ENCODE measurements at regions of chr19 and their contacts with region 1.

Region 1: DNA sequence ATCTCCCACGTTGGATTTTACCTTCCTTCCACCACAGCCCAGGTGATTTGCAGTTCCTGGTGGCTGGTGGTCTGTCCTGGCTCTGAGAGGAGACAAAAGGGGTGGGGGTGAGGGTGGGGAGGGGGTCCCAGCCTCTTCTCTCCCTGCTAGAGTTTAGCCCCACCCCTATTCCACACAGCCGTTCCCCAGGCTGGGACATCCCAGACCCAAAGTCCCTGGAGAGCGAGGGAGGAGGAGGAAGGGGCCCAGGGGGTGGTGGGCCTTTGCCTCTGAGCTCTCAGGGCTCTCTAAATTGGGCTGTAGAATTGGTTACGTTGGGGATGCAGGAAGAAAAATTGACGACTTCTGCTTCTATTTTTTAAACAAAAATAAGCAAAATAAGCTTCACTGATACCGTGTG is 81.9 kb downstream of the SLC6A16 start:
- DNase-seq: no peak
- H3K4me3 ChIP-seq: no peak overlapping the region
- H3K27ac ChIP-seq: no peak overlapping the region
- H3K4me1 ChIP-seq: no peaks in the 10 kb centered on the region
- H3K27me3 ChIP-seq: no peaks in the 10 kb centered on the region
- CTCF ChIP-seq: no peak

Region 2: DNA sequence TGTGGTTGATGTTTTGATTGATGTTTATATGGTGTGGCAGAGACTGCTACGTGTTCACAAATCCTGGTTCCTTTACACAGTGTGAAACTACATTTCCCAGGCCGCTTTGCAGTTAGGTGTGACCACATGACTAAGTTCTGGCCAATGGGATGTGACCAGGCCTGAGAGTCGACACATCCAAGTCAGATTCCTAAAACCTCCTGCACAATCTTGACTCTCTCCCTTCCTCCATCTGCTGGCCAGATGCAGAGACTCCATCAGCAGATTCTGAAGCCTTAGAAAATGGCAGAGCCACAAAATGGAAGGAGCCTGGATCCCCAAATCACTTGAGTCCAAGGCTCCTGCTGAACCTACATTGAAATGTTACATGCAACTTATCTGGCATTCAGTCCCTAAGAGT is 104.7 kb after region 1 on chr19:
- CTCF ChIA-PET with region 1: no interaction called
- dilution Hi-C with region 1: loop called (anchors 5 kb)
- in situ Hi-C with region 1: no loop called
- intact Hi-C with region 1: no loop called
- DNase-seq: peak; percentile 67
- H3K4me3 ChIP-seq: no peak overlapping the region
- H3K27ac ChIP-seq: no peak overlapping the region
- H3K4me1 ChIP-seq: no peaks in the 10 kb centered on the region
- H3K27me3 ChIP-seq: no peaks in the 10 kb centered on the region
- CTCF ChIP-seq: peak in 1 of 2 donors; percentile 24